ENCODE measurements at regions of chr3 and their contacts with region 1.

Region 1: GRCh38 chr3:149129326-149130205 is at the start of gene HPS3:
- DNase-seq: peak; percentile 91
- H3K4me3 ChIP-seq: peak within 1 kb of the TSS; percentile 53 to 85 (median 82)
- H3K27ac ChIP-seq: peak within 1 kb of the TSS; percentile 30
- H3K4me1 ChIP-seq: peaks cover 7% of the 10 kb centered on the region
- H3K27me3 ChIP-seq: peaks cover 0 to 1% of the 10 kb centered on the region in 2 experiments
- CTCF ChIP-seq: no peak
- POLR2A ChIP-seq: peak; percentile 91
- total RNA-seq, gene HPS3: 16.1 and 17.8 TPM in 2 replicates

Region 2: DNA sequence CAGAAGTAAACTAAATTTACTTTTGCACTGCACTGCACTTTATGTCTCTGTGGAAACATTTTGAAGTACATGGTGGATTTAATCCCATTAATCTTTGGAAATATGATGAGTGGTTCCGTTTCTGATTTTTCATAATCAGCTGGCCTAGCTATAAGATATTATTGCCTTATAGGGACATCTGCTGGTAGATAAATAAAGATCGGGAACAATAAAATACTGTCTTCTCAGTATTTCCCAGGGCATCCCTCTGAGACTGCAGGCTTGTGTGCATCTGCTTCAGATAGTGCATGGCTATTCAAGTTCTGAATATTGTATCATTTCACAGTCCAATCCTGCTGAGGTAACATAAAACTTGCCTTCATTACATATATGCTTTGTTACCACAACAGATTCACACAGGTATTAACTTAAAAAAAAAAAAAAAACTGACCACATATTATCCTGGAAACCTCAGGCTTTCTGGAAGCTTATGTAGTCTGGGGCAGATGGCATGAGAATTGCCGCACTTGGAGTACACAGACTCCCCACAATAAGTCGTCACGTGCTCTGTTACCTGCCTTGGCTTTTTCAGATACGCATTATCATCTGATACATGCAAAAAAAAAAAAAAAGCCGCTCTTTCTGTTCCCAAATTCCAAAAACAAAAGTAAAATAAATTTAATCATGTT is 762.7 kb before region 1 on chr3:
- CTCF ChIA-PET with region 1: no interaction called
- POLR2A ChIA-PET with region 1: no interaction called
- dilution Hi-C with region 1: no loop called
- intact Hi-C with region 1: no loop called
- DNase-seq: no peak
- H3K4me3 ChIP-seq: no peak overlapping the region
- H3K27ac ChIP-seq: no peak overlapping the region
- H3K4me1 ChIP-seq: no peaks in the 10 kb centered on the region
- H3K27me3 ChIP-seq: no peaks in the 10 kb centered on the region
- CTCF ChIP-seq: no peak
- POLR2A ChIP-seq: no peak

Region 3: DNA sequence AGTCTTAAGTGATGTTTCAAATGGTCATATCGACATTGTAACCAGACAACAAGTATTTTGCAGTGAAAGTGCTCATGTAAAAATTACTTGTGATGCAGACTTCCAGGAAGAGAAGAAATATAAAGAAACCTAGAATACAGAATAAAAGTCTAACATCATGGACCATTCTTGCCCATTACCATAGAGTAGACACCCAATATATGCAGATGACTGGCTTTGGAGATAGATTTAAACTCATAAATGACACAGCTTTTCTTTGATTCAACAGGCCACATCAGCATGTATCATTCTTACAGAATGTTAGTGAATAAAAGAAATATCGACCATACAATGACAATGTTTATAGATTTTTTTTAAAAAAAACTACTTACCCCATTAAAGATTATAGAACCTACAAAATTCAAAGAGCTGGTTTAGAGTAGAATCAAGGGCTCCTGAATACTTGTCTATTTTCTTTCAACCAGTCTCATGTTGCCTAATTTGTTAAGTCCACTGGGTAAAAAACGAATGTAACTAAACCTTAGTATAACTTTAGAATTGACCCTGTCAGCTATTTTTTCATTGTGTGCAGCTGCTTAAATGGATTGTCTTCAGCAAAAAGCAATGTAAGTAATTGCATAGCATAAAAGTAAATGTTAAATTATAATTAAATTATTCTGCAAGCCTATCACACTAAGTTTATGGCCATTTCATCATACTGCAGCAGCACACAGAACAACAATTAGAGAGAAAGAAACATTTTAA is 700.5 kb before region 1 on chr3:
- CTCF ChIA-PET with region 1: no interaction called
- POLR2A ChIA-PET with region 1: no interaction called
- dilution Hi-C with region 1: no loop called
- intact Hi-C with region 1: no loop called
- DNase-seq: no peak
- H3K4me3 ChIP-seq: no peak overlapping the region
- H3K27ac ChIP-seq: no peak overlapping the region
- H3K4me1 ChIP-seq: no peaks in the 10 kb centered on the region
- H3K27me3 ChIP-seq: no peaks in the 10 kb centered on the region
- CTCF ChIP-seq: no peak
- POLR2A ChIP-seq: no peak

Region 4: DNA sequence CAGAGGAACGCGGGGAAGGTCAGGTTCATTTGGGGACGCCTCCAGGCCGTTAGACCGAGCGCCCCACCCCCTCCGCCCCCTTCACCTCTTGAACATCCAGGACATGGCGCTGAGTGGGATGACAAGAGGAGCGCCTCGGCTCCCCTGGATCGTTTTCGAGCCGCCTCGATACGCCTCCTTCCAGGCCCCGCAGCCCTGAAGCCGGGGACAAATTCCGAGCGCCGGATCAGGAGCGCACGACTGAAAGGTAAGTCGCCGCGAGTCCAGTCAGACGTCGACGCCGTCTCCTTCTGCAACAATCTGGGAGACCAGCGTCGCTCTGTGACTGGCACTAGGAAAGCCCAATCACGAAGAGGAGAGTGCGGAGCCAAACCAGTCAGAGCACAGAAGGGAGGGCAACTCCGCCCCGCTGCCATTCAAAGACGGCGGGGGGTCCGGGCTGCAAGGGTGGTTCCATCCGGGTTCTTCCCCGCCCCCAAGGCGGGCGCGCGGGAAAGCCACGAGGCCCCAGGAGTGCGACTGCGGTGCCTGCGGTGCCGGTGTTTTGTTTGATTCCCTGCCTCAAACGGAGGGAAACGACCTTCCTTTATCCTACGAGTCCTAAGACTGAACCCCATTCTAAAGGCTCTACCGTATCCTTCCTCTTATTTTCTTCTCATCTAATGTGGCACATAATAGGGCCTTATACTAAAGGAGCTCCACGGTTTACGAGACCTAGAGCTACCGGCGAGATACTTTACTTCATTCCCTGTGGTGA is 43.2 kb before region 1 on chr3 and contains the start of gene HLTF:
- CTCF ChIA-PET with region 1: no interaction called
- POLR2A ChIA-PET with region 1: no interaction called
- dilution Hi-C with region 1: no loop called
- intact Hi-C with region 1: loop called (anchors 1 kb)
- DNase-seq: peak; percentile 98
- H3K4me3 ChIP-seq: peak within 1 kb of the TSS; percentile 68 to 81 (median 73)
- H3K27ac ChIP-seq: peak within 1 kb of the TSS; percentile 47
- H3K4me1 ChIP-seq: peaks cover 4% of the 10 kb centered on the region
- H3K27me3 ChIP-seq: no peaks in the 10 kb centered on the region
- CTCF ChIP-seq: no peak
- POLR2A ChIP-seq: peak; percentile 64
- total RNA-seq, gene HLTF: 23.2 and 24.6 TPM in 2 replicates

Region 5: GRCh38 chr3:149224736-149225594 is 95.4 kb after region 1 on chr3:
- CTCF ChIA-PET with region 1: no interaction called
- POLR2A ChIA-PET with region 1: no interaction called
- dilution Hi-C with region 1: no loop called
- intact Hi-C with region 1: loop called (anchors 1 kb)
- DNase-seq: peak; percentile 89
- H3K4me3 ChIP-seq: peak overlapping the region; percentile 18 to 77 (median 55)
- H3K27ac ChIP-seq: peak overlapping the region; percentile 96
- H3K4me1 ChIP-seq: peaks cover 18% of the 10 kb centered on the region
- H3K27me3 ChIP-seq: no peaks in the 10 kb centered on the region
- CTCF ChIP-seq: no peak
- POLR2A ChIP-seq: no peak

Region 6: GRCh38 chr3:149339931-149340309 is 210.4 kb after region 1 on chr3:
- CTCF ChIA-PET with region 1: interaction called, 3 read pairs
- POLR2A ChIA-PET with region 1: no interaction called
- dilution Hi-C with region 1: no loop called
- intact Hi-C with region 1: loop called (anchors 2 kb)
- DNase-seq: peak; percentile 99
- H3K4me3 ChIP-seq: peak overlapping the region in 1 of 3 experiments; percentile 45
- H3K27ac ChIP-seq: peak overlapping the region; percentile 99
- H3K4me1 ChIP-seq: peaks cover 54% of the 10 kb centered on the region
- H3K27me3 ChIP-seq: no peaks in the 10 kb centered on the region
- CTCF ChIP-seq: no peak
- POLR2A ChIP-seq: peak; percentile 88

Region 7: DNA sequence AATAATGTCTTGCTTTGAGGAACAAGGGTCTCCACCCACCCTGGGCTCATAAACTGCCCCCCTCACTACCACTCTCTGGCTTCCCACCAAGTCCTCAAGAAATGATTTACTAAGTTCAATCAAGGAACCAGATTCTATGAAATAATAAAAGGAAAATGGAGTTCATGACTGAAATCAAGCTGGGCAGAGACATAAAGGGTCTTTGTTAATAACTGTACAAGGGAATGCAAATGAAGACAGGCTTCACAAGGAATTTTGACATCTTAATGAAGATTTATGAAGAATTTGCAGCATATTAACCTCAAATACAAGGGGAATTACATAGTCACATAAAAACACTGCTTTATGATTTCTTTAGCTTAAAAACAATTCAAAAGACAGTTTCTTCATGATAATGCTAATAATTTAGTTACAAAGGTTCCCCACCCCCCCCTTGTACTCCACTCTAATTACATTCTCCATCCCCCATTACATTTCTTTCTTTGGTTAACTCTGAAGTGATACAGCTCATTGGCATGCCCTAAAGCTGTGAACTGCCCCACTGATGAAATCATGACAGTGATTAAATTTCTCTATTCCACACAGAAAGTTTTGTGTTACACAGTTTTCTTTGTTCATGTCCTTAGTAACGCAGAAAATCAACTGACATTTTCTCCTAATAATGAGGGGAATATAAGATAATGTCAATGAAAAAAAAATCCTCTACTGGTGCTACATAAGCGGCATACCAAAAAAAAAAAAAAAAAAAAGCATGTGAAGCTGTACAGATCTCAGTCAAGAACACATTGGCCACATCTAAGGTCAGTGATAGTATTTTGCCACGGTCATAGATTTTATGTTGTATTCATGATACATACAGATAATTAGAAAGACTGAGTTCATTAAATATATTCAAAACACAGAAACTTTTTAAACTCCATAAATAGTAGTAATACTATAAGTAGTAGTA is 473.8 kb after region 1 on chr3:
- CTCF ChIA-PET with region 1: no interaction called
- POLR2A ChIA-PET with region 1: no interaction called
- dilution Hi-C with region 1: no loop called
- intact Hi-C with region 1: no loop called
- DNase-seq: no peak
- H3K4me3 ChIP-seq: no peak overlapping the region
- H3K27ac ChIP-seq: peak overlapping the region; percentile 83
- H3K4me1 ChIP-seq: peaks cover 93% of the 10 kb centered on the region
- H3K27me3 ChIP-seq: no peaks in the 10 kb centered on the region
- CTCF ChIP-seq: no peak
- POLR2A ChIP-seq: no peak

Region 8: DNA sequence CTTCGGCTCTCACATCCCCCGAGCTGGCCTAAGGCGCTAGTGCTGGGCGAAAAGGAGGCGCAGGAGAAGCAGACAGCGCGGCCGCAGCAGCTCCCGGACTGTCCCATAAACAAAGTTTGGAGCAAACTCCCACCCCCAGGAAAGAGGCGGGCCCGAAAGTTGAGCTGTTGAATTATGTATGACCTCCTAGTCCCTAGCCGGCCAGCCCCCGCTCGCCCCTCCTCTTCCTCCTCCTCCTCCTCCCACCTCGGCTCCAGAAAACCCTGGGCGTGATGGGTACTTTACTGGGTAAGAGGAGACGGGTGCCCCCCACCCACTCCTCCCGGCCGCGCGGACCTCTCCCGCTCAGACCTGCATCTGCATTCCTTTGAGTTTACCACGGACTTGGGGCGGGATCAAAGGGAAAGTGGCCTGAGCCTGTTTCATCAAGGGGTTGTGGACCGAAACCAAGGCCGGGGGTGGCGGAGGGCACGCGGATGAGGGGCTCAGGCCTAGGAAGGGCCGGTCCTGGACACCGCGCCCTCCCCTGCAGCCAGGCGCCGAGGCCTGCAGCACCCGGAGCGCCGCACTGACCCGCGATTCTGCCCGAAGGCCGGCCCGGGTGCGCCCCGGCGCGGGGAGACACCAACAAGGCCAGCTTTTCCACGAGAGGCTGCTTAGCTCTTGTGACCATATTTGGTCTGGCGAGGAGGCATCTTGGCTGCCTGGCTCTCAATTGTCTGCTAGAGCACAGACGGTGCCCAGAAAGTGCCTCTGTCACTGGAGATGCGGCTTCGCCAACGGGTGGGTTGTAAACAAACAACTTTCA is 528.6 kb after region 1 on chr3 and contains the start of gene WWTR1:
- CTCF ChIA-PET with region 1: no interaction called
- POLR2A ChIA-PET with region 1: no interaction called
- dilution Hi-C with region 1: no loop called
- intact Hi-C with region 1: no loop called
- DNase-seq: peak; percentile 97
- H3K4me3 ChIP-seq: peak within 1 kb of the TSS; percentile 87 to 99 (median 98)
- H3K27ac ChIP-seq: peak within 1 kb of the TSS; percentile 85
- H3K4me1 ChIP-seq: peaks cover 39% of the 10 kb centered on the region
- H3K27me3 ChIP-seq: no peaks in the 10 kb centered on the region
- CTCF ChIP-seq: no peak
- POLR2A ChIP-seq: peak; percentile 99
- total RNA-seq, gene WWTR1: 210 and 262 TPM in 2 replicates

Measured in endothelial cell of umbilical vein (primary cell).